CD4-positive, alpha-beta memory T cell (primary cell): ENCODE measurements at regions of chr4 and their contacts with region 1.

Region 1: GRCh38 chr4:99563310-99564186 is at the start of gene TRMT10A:
- DNase-seq: peak; percentile 97 to 98 (median 98)
- H3K4me3 ChIP-seq: peak within 1 kb of the TSS; percentile 74 to 95
- H3K4me3 Mint-ChIP-seq: peak within 1 kb of the TSS; percentile 95 to 99 (median 98)
- H3K27ac ChIP-seq: peak within 1 kb of the TSS; percentile 93
- H3K27ac Mint-ChIP-seq: peak within 1 kb of the TSS; percentile 99 to 100 (median 100)
- H3K4me1 ChIP-seq: peaks cover 10% of the 10 kb centered on the region
- H3K4me1 Mint-ChIP-seq: peaks cover 13 to 24% (median 19%) of the 10 kb centered on the region in 4 donors
- H3K27me3 ChIP-seq: no peaks in the 10 kb centered on the region
- H3K27me3 Mint-ChIP-seq: peaks cover 7 to 14% of the 10 kb centered on the region in 2 donors
- total RNA-seq, gene TRMT10A: 5.4 to 5.7 TPM

Region 2: GRCh38 chr4:98260579-98261290 is 1302.8 kb before region 1 on chr4:
- CTCF ChIA-PET with region 1: no interaction called
- POLR2A ChIA-PET with region 1: interaction called, 5 read pairs
- intact Hi-C with region 1: loop called (anchors 5 kb)
- DNase-seq: peak in 4 of 5 donors; percentile 83 to 90 (median 84)
- H3K4me3 ChIP-seq: peak overlapping the region; percentile 70 to 82
- H3K4me3 Mint-ChIP-seq: peak overlapping the region; percentile 93 to 95 (median 94)
- H3K27ac ChIP-seq: peak overlapping the region; percentile 86
- H3K27ac Mint-ChIP-seq: peak overlapping the region; percentile 90 to 94 (median 93)
- H3K4me1 ChIP-seq: peaks cover 32% of the 10 kb centered on the region
- H3K4me1 Mint-ChIP-seq: peaks cover 37 to 60% (median 47%) of the 10 kb centered on the region in 4 donors
- H3K27me3 ChIP-seq: no peaks in the 10 kb centered on the region
- H3K27me3 Mint-ChIP-seq: no peaks in the 10 kb centered on the region

Region 3: DNA sequence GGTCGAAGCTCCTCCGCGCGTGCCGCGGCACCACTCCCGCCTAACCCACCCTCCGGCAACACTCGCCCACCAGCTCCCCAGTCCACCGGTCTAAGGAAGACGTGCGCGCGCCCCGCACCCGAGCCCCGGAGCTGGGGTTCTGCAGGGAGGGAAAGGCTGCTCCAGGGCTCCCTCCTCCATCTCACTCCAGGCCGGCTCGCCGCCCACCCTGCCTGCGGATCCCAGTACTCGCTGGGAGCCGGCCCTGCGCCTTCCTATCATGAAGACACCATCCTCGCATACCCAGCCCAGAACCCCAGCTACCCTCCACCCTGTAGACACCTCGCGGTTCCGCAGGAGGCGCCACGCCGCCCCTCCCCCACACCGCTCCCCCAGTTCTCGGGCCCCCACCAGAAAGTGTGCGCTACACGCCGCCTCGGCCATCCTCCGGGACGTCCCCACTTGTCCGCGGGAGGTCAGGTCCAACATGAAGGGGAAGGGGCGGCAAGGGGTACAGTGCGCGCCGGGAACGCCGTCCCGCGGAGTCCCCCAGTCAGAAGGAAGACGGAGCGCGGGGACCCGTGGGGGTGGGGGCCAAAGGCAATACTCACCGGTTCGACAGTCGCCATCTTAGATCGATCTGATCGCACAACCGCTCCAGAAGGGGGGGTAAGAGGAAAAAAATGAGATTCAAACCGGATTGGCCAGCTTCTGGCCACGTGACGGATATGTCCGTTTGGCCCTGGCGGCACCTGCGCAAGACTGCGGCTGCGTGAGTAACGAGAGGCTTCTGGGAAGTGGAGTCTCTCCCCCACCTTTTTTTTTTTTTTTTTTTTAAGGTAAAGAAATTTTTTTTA is 634.8 kb before region 1 on chr4 and contains the start of gene EIF4E:
- CTCF ChIA-PET with region 1: no interaction called
- POLR2A ChIA-PET with region 1: interaction called, 4 read pairs
- intact Hi-C with region 1: loop called (anchors 1 kb)
- DNase-seq: peak; percentile 97 to 99 (median 98)
- H3K4me3 ChIP-seq: peak within 1 kb of the TSS; percentile 66 to 97
- H3K4me3 Mint-ChIP-seq: peak within 1 kb of the TSS; percentile 92 to 100 (median 98)
- H3K27ac ChIP-seq: peak within 1 kb of the TSS; percentile 82
- H3K27ac Mint-ChIP-seq: peak within 1 kb of the TSS; percentile 94 to 99 (median 98)
- H3K4me1 ChIP-seq: peaks cover 33% of the 10 kb centered on the region
- H3K4me1 Mint-ChIP-seq: peaks cover 17 to 58% (median 30%) of the 10 kb centered on the region in 4 donors
- H3K27me3 ChIP-seq: no peaks in the 10 kb centered on the region
- H3K27me3 Mint-ChIP-seq: peaks cover 0 to 2% of the 10 kb centered on the region in 2 donors
- total RNA-seq, gene EIF4E: 58.2 to 62.5 TPM

Region 4: GRCh38 chr4:99504804-99505569 is 58.6 kb before region 1 on chr4:
- CTCF ChIA-PET with region 1: interaction called, 3 read pairs
- POLR2A ChIA-PET with region 1: interaction called, 12 read pairs
- intact Hi-C with region 1: no loop called
- DNase-seq: peak in 1 of 5 donors; percentile 22
- H3K4me3 ChIP-seq: no peak overlapping the region
- H3K4me3 Mint-ChIP-seq: peak overlapping the region in 1 of 8 donors; percentile 47
- H3K27ac ChIP-seq: no peak overlapping the region
- H3K27ac Mint-ChIP-seq: peak overlapping the region in 3 of 7 donors; percentile 19 to 56 (median 40)
- H3K4me1 ChIP-seq: peaks cover 41% of the 10 kb centered on the region
- H3K4me1 Mint-ChIP-seq: peaks cover 22 to 53% (median 35%) of the 10 kb centered on the region in 4 donors
- H3K27me3 ChIP-seq: no peaks in the 10 kb centered on the region
- H3K27me3 Mint-ChIP-seq: no peaks in the 10 kb centered on the region

Region 5: DNA sequence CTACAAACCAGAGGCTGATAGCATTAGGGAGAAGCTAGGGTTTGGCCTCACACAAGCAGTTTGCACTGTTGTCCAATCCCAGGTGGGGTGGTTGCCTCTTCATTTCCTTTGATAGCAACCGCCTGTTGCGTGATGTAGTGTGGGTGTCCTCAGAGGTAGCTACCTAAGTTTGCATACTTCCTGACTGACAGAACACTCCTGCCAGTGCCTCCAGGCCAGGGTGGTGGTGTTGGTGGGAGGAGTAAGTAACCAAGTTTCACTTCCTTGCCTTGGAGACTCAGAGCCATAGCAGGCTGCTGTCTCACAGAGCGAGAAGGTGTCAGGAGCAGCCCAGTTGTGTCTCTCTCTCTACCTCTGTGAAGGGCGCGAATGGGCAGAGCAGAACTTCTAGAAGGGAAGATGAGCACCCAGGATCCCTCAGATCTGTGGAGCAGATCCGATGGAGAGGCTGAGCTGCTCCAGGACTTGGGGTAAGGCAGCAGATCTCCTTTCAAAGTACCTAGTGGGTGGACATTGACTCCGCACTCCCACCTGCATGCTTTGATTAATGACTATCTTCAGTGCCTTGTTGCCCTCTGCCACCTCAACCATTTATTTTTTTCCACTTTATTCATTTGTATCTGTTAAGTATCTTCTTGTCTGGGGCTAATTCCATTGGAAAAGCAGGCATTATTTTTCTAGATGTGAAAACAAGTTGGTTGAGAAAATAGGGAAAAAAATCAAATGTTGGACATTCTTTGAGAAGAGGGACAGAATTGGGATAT is 253.2 kb after region 1 on chr4 and contains the start of gene DAPP1:
- CTCF ChIA-PET with region 1: interaction called, 12 read pairs
- POLR2A ChIA-PET with region 1: interaction called, 29 read pairs
- intact Hi-C with region 1: no loop called
- DNase-seq: peak; percentile 82 to 93 (median 87)
- H3K4me3 ChIP-seq: peak within 1 kb of the TSS; percentile 55 to 92
- H3K4me3 Mint-ChIP-seq: peak within 1 kb of the TSS; percentile 89 to 95 (median 91)
- H3K27ac ChIP-seq: peak within 1 kb of the TSS; percentile 69
- H3K27ac Mint-ChIP-seq: peak within 1 kb of the TSS; percentile 91 to 98 (median 97)
- H3K4me1 ChIP-seq: peaks cover 63% of the 10 kb centered on the region
- H3K4me1 Mint-ChIP-seq: peaks cover 44 to 61% (median 54%) of the 10 kb centered on the region in 4 donors
- H3K27me3 ChIP-seq: no peaks in the 10 kb centered on the region
- H3K27me3 Mint-ChIP-seq: no peaks in the 10 kb centered on the region
- total RNA-seq, gene DAPP1: 21.3 to 23.0 TPM

Region 6: GRCh38 chr4:99894161-99894997 is 330.8 kb after region 1 on chr4 and contains the start of gene LAMTOR3:
- CTCF ChIA-PET with region 1: interaction called, 5 read pairs
- POLR2A ChIA-PET with region 1: interaction called, 28 read pairs
- intact Hi-C with region 1: loop called (anchors 1 kb)
- DNase-seq: peak; percentile 88 to 94 (median 92)
- H3K4me3 ChIP-seq: peak within 1 kb of the TSS; percentile 76 to 97
- H3K4me3 Mint-ChIP-seq: peak within 1 kb of the TSS; percentile 97 to 100 (median 98)
- H3K27ac ChIP-seq: peak within 1 kb of the TSS; percentile 87
- H3K27ac Mint-ChIP-seq: peak within 1 kb of the TSS; percentile 97 to 99 (median 99)
- H3K4me1 ChIP-seq: peaks cover 34% of the 10 kb centered on the region
- H3K4me1 Mint-ChIP-seq: peaks cover 27 to 47% (median 38%) of the 10 kb centered on the region in 4 donors
- H3K27me3 ChIP-seq: no peaks in the 10 kb centered on the region
- H3K27me3 Mint-ChIP-seq: no peaks in the 10 kb centered on the region
- total RNA-seq, gene LAMTOR3: 24.2 to 27.0 TPM